PC-3 (cell line): ENCODE measurements at regions of chr13 and their contacts with region 1.

Region 1: DNA sequence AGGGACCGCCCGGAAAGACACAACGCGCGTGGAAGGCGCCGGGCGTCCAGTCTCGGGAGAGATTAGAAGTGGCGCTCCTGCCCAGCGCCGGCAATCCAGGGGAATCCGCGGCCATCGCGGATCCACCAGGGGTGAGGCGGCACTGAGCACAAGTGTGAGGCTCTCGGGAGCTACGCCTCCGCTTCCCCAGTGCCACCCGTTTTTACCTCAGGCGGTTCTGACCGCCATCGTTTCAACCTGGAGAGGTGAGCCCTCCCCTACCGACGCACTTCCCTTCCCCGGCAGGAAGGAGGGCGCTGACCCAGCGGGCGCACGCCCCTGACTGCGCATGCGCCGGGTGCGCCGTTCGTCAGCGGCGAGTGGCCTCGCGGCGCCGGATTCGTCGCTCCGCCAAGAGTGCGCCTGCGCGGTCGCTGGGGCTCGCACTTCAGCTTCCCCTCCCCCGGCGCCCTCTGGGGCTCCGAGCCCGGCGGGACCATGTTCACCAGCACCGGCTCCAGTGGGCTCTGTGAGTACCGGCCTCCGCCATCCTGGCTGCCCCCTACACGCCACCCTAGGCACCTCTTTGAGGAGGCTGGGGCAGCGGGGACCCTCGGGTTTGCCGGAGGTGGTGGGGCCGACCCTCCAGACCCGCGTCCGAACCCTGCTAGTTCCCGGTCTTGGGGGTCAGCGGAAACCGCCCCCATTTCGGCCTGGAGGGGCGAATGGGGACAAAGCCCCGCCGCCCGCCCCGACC is at the start of gene UBAC2:
- DNase-seq: peak; percentile 94
- ATAC-seq: peak; percentile 64
- H3K4me3 ChIP-seq: peak within 1 kb of the TSS; percentile 99
- H3K27ac ChIP-seq: peak within 1 kb of the TSS; percentile 93
- H3K4me1 ChIP-seq: peaks cover 46% of the 10 kb centered on the region
- H3K27me3 ChIP-seq: no peaks in the 10 kb centered on the region
- CTCF ChIP-seq: no peak
- total RNA-seq, gene UBAC2: 34.5 and 37.1 TPM in 2 replicates

Region 2: DNA sequence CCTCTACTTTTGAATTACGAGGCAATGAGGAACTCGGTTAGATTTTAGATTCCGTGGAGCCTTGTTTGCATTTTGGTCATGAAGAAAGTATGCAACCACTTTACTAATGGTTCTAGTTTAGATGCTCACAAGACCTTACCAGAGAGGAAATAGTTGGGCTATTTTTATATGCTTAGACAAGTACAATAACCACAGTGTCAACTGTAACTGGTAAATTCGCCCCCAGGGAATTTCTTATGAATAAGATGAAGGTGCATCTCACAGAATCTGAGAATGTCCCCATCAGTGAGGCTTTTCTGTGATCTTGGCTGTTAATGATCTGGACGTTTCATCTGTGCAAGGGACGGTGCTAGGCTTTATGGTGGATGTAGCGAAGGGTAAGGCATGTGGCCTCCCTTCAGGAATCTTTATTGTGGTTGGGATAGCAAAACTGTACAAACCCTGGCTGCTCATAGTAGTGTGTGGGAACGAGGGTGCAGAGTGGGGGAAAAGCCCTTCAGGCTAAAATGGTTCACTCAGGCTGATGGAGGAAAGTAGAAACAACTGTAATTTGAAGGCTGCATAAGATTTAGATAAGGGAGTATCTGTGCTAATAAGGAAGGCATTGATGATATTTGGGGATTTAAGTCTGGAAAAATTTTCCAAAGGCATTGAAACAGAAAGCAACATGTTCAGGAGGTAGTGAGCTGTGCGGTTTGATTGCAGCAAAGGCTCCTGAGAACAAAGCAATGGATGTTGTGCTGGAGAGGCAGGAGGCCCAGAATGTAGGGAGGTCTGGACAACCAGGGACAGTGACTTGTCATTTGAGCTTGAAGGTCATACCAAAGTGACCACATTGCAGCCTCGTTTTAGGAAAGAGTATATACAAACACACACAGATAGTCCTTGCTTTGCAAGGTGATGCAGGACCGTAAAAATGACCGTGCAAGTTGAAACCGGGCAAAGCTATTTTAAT is 28.4 kb after region 1 on chr13:
- CTCF ChIA-PET with region 1: no interaction called
- POLR2A ChIA-PET with region 1: no interaction called
- intact Hi-C with region 1: loop called (anchors 2 kb)
- DNase-seq: peak; percentile 78
- ATAC-seq: peak; percentile 96
- H3K4me3 ChIP-seq: peak overlapping the region; percentile 18; the same call in 1 of the 2 replicates
- H3K27ac ChIP-seq: peak overlapping the region; percentile 42
- H3K4me1 ChIP-seq: peaks cover 28% of the 10 kb centered on the region
- H3K27me3 ChIP-seq: no peaks in the 10 kb centered on the region
- CTCF ChIP-seq: no peak